Activated CD8-positive, alpha-beta T cell treated with anti-CD3 and anti-CD28 coated beads, Interleukin-2, amount 10 ng/mL, durations not matched to agents 7 days and 5 days (primary cell): ENCODE measurements at regions of chr4 and their contacts with region 1.

Region 1: GRCh38 chr4:83267121-83267829 is 17.3 kb downstream of the COQ2 start:
- DNase-seq: no peak
- ATAC-seq: no peak
- H3K4me3 Mint-ChIP-seq: no peak overlapping the region
- H3K27ac Mint-ChIP-seq: no peak overlapping the region
- H3K4me1 Mint-ChIP-seq: peaks cover 19% of the 10 kb centered on the region
- H3K27me3 Mint-ChIP-seq: no peaks in the 10 kb centered on the region

Region 2: GRCh38 chr4:83074086-83074704 is 193.1 kb before region 1 on chr4:
- CTCF ChIA-PET with region 1: interaction called, 39 read pairs
- POLR2A ChIA-PET with region 1: no interaction called
- DNase-seq: peak; percentile 84
- ATAC-seq: peak; percentile 91
- H3K4me3 Mint-ChIP-seq: peak overlapping the region; percentile 59
- H3K27ac Mint-ChIP-seq: peak overlapping the region; percentile 48
- H3K4me1 Mint-ChIP-seq: peaks cover 17% of the 10 kb centered on the region
- H3K27me3 Mint-ChIP-seq: no peaks in the 10 kb centered on the region